ENCODE measurements at regions of chr20 and their contacts with region 1.

Region 1: DNA sequence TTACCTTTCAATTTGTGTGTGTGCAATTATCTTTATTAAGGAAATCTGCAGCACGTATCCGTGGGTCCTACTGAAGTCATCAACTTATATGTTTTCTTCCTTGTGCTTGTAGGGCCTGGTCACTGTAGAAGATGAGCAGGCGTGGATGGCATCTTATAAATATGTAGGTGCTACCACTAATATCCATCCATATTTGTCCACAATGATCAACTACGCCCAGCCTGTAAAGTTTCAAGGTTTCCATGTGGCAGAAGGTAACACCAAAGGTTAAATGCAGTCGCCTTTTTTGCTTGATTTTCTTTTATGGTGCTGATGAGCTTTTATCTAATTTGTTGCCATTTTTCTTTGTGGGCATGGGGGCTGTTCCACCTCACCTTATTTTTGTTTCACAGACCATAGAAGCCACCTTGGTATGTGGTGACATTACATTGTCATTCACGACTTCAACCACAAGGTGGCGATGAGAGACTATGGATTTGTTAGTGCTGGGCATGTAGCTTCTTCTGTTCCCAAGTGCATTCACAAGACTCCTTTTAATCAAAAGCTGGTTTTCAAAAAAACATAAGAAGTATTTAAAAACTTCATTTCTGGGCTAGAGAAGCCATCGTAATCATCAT is 106.5 kb upstream of the LAMP5 start:
- DNase-seq: peak; percentile 7 to 81
- H3K4me3 ChIP-seq: no peak overlapping the region
- H3K27ac ChIP-seq: no peak overlapping the region
- H3K4me1 ChIP-seq: no peaks in the 10 kb centered on the region
- H3K27me3 ChIP-seq: no peaks in the 10 kb centered on the region
- CTCF ChIP-seq: peak in 2 of 3 experiments; percentile 78 to 85; a peak in 3 of 4 replicates
- EP300 ChIP-seq: no peak
- POLR2A ChIP-seq: no peak
- RAD21 ChIP-seq: peak; percentile 94

Region 2: DNA sequence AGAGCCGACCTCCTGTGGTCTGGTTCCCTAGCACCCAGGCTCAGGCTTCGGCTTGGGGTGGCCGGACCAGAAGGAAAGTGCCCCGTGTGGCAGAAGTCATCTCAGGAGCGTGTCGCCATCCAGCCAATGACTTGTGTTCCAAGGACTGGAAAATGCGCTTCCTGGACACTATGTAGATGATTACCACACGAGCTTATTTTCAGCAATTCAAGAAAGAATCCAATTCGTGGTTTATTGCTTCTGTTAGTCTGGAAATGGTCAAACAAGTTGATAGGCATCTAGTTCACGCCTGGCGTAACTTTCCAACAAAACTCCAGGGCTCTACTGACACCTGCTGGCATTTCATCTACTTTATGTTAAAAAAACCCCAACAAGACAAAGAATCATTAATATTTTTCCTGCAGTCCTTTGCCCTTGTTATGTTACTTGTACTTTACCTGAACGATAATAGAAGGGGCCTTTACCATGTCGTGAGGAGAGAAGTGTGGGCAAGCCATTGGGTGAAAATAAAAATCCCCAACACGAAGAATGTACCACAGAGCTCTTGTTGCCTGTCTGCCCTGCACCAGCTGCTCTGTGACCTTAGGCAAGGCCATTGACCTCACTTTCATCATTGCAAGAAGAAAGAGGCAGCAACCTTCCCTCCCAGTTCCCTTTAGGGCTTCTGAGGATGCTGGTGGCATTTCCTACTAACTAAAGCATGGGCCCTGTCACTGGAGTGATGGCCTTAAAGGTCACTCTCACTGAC is 48.2 kb before region 1 on chr20:
- CTCF ChIA-PET with region 1: no interaction called
- POLR2A ChIA-PET with region 1: no interaction called
- DNase-seq: peak in 1 of 2 experiments; percentile 62
- H3K4me3 ChIP-seq: no peak overlapping the region
- H3K27ac ChIP-seq: no peak overlapping the region
- H3K4me1 ChIP-seq: no peaks in the 10 kb centered on the region
- H3K27me3 ChIP-seq: no peaks in the 10 kb centered on the region
- CTCF ChIP-seq: peak in 2 of 3 experiments; percentile 47; a peak in 3 of 4 replicates
- EP300 ChIP-seq: no peak
- POLR2A ChIP-seq: no peak
- RAD21 ChIP-seq: peak; percentile 75 to 77

Region 3: GRCh38 chr20:9375221-9375681 is 32.7 kb before region 1 on chr20:
- CTCF ChIA-PET with region 1: interaction called, 10 read pairs
- POLR2A ChIA-PET with region 1: no interaction called
- DNase-seq: no peak
- H3K4me3 ChIP-seq: peak overlapping the region in 1 of 4 experiments; percentile 16; a peak in 1 of 8 replicates
- H3K27ac ChIP-seq: no peak overlapping the region
- H3K4me1 ChIP-seq: peaks cover 0 to 11% (median 1%) of the 10 kb centered on the region in 4 experiments; a peak in 1 of 7 replicates
- H3K27me3 ChIP-seq: no peaks in the 10 kb centered on the region
- CTCF ChIP-seq: no peak
- EP300 ChIP-seq: no peak
- POLR2A ChIP-seq: no peak
- RAD21 ChIP-seq: no peak

Region 4: DNA sequence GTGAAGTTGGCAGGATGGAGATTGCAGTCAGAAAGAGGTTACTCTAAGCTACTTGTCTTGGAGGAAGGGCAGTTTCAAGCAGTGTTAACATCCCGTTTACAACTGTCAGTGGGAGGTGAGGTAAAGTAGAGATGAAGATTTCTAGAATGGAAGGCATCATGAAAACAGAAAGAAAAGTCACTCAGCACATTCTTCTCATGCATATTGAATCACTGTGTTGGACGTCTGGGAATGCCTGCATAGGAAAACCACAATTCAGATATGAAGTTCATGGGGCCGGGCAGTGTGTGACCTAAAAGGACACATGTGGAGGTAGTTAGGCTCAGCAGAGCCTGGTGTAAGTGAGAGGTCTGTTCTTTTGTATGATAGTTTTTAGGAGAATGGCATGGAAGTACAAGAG is 33.0 kb after region 1 on chr20:
- CTCF ChIA-PET with region 1: interaction called, 13 read pairs
- POLR2A ChIA-PET with region 1: no interaction called
- DNase-seq: no peak
- H3K4me3 ChIP-seq: no peak overlapping the region
- H3K27ac ChIP-seq: no peak overlapping the region
- H3K4me1 ChIP-seq: no peaks in the 10 kb centered on the region
- H3K27me3 ChIP-seq: no peaks in the 10 kb centered on the region
- CTCF ChIP-seq: no peak
- EP300 ChIP-seq: no peak
- POLR2A ChIP-seq: no peak
- RAD21 ChIP-seq: no peak

Region 5: GRCh38 chr20:9467995-9468394 is 60.1 kb after region 1 on chr20:
- CTCF ChIA-PET with region 1: interaction called, 11 read pairs
- POLR2A ChIA-PET with region 1: no interaction called
- DNase-seq: no peak
- H3K4me3 ChIP-seq: no peak overlapping the region
- H3K27ac ChIP-seq: no peak overlapping the region
- H3K4me1 ChIP-seq: no peaks in the 10 kb centered on the region
- H3K27me3 ChIP-seq: no peaks in the 10 kb centered on the region
- CTCF ChIP-seq: peak; percentile 78 to 83 (median 80)
- EP300 ChIP-seq: no peak
- POLR2A ChIP-seq: no peak
- RAD21 ChIP-seq: peak; percentile 86 to 88

Region 6: GRCh38 chr20:9503526-9504245 is 95.8 kb after region 1 on chr20:
- CTCF ChIA-PET with region 1: interaction called, 42 read pairs
- POLR2A ChIA-PET with region 1: no interaction called
- DNase-seq: no peak
- H3K4me3 ChIP-seq: no peak overlapping the region
- H3K27ac ChIP-seq: no peak overlapping the region
- H3K4me1 ChIP-seq: peaks cover 0 to 21% (median 12%) of the 10 kb centered on the region in 4 experiments; a peak in 6 of 7 replicates
- H3K27me3 ChIP-seq: peaks cover 33 to 46% (median 43%) of the 10 kb centered on the region in 4 experiments
- CTCF ChIP-seq: peak; percentile 37 to 50 (median 49)
- EP300 ChIP-seq: no peak
- POLR2A ChIP-seq: no peak
- RAD21 ChIP-seq: peak; percentile 59 to 67

Region 7: GRCh38 chr20:9602847-9603183 is 194.9 kb after region 1 on chr20:
- CTCF ChIA-PET with region 1: interaction called, 132 read pairs
- POLR2A ChIA-PET with region 1: no interaction called
- DNase-seq: no peak
- H3K4me3 ChIP-seq: no peak overlapping the region
- H3K27ac ChIP-seq: no peak overlapping the region
- H3K4me1 ChIP-seq: peaks cover 0 to 4% (median 0%) of the 10 kb centered on the region in 4 experiments; a peak in 1 of 7 replicates
- H3K27me3 ChIP-seq: no peaks in the 10 kb centered on the region; a peak in 1 of 7 replicates
- CTCF ChIP-seq: no peak
- EP300 ChIP-seq: no peak
- POLR2A ChIP-seq: no peak
- RAD21 ChIP-seq: no peak

Measured in H1 (cell line).